ENCODE measurements at regions of chr7 and their contacts with region 1.

Region 1: DNA sequence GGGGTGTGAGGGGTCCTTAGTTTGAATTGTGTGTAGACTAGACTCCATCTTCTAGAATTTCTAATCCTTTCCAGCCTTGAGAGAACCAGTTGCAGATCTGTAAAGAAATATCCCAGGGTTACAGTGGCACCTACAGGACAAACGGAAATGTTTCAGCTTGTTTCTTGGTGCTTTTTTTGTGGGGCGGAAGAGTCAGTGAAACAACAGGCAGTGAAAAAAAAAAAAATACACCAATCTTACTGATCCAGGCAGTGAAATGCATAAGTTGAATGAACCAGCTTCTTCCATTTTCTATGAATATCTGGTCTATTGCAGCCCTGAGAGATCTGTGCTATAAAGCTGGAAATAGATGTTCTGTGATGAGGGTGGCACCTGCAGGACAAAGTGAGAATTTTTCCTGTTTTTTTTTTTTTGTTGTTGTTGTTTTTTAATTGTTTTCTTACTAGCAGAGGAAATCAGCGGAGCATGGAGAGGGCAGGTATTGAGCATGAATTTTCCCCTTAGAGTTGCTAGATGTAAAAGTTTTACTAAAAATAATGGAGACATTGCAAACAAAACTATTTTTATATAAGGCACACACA is 81.9 kb upstream of the DYNC1I1 start:
- DNase-seq: no peak
- ATAC-seq: peak; percentile 57
- H3K4me3 Mint-ChIP-seq: no peak overlapping the region
- H3K27ac Mint-ChIP-seq: no peak overlapping the region
- H3K4me1 Mint-ChIP-seq: peaks cover 4% of the 10 kb centered on the region
- H3K27me3 Mint-ChIP-seq: no peaks in the 10 kb centered on the region

Region 2: DNA sequence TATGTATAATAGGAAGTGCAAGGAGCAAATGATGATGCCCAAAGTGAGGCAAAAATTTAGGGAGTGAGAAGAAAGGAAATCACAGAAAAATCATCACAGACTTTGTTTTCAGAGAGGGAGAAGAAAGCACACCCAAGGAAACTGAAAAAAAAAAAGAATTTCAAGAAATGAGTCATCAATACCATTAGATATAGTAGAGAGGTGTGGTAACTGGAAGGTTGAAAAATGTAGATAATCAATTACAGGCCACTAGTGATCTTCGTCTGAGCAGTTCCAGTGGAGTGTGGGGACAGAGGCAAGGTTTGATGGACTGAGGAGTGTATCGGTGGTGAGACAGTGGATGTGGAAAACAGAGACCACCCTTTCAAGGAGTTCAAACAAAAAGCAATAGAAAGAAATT is 173.0 kb before region 1 on chr7:
- CTCF ChIA-PET with region 1: interaction called, 92 read pairs
- DNase-seq: no peak
- ATAC-seq: peak; percentile 51
- H3K4me3 Mint-ChIP-seq: no peak overlapping the region
- H3K27ac Mint-ChIP-seq: no peak overlapping the region
- H3K4me1 Mint-ChIP-seq: no peaks in the 10 kb centered on the region
- H3K27me3 Mint-ChIP-seq: peaks cover 41% of the 10 kb centered on the region

Region 3: DNA sequence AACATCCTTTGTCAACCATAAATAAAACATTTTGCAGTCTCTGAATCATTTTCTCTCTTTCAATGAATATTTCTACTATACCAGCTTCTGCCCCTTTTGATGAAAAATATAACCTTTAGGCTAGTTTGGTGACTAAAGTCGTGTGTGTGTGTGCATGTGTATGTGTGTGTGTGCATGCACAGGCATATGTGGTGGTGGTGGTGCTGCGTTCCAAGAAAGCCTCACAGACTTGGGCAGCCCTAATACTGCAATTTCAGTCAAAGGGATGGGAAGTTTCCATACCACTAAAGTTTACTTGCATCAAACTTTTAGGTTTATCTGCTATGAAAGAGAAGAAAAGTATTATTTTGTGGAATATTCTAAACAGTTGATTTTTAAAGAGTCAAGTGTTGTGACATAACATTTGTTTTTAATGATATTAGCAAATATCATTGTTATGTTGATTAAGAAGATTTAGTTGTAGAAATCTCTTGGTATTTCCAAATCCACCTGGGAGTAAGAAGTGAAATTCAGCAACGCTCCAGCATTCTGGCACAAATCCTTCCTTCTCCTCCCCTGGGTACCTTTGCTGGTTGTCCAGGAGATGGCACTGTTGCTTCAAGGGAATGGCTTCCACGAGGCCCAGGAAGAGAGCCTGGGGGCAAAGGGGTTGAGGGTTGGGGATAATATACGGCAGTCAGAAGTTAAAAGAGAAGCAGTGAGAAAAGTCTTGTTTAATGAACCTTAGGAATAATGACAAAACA is 163.3 kb before region 1 on chr7:
- CTCF ChIA-PET with region 1: interaction called, 49 read pairs
- DNase-seq: no peak
- ATAC-seq: no peak
- H3K4me3 Mint-ChIP-seq: no peak overlapping the region
- H3K27ac Mint-ChIP-seq: no peak overlapping the region
- H3K4me1 Mint-ChIP-seq: no peaks in the 10 kb centered on the region
- H3K27me3 Mint-ChIP-seq: peaks cover 23% of the 10 kb centered on the region

Region 4: GRCh38 chr7:95749515-95749914 is 59.1 kb after region 1 on chr7:
- CTCF ChIA-PET with region 1: no interaction called
- DNase-seq: no peak
- ATAC-seq: no peak
- H3K4me3 Mint-ChIP-seq: no peak overlapping the region
- H3K27ac Mint-ChIP-seq: no peak overlapping the region
- H3K4me1 Mint-ChIP-seq: no peaks in the 10 kb centered on the region
- H3K27me3 Mint-ChIP-seq: no peaks in the 10 kb centered on the region

Measured in activated CD8-positive, alpha-beta memory T cell treated with anti-CD3 and anti-CD28 coated beads, Interleukin-2, amount 10 ng/mL, durations not matched to agents 7 days and 5 days (primary cell).